Ovary (tissue), 10 donors: ENCODE measurements at regions of chr2 and their contacts with region 1.

Region 1: DNA sequence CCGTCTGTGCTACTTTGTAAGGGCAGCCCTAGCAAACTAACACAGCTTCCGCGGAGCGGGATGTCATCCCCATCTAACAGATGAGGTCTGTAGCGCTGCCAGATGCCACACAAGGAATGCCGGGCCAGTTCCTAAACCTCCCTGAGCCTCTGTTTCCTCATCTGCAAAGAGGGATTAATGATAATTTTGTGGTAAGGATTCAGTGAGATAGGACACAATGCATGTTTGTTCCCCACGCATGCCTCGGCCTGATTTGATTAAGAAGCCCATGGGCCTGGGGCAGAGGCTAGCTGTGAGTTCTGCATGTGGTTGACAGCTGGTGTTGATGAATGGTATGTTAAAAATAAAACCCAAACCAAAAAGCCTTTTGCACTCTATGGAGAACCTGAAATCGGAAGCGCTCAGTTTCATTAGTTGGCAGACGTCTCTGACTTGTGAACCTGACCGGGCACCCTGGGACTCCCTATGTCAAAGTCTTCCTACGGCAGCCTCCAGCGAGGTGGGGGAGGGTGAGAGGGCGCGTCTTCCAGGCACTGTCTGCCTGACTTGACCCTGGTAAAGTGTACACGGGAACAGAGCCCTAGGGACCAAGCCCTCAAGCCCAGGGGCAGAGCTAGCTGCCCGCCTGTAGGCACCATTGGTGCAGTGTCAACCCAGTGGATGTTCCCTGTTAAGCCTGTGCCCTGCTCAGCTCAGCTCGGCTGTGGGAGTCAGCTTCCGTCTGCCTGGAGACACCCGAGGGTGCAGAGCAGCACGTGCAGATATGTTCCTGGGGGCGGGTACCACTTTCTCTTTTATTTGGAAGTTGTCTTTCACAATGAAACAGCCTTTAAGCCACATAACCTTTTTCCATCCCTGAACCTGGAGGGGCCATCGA is 14.8 kb upstream of the INHBB start:
- DNase-seq: no peak
- H3K4me3 ChIP-seq: no peak overlapping the region
- H3K27ac ChIP-seq: no peak overlapping the region
- H3K4me1 ChIP-seq: no peaks in the 10 kb centered on the region
- H3K27me3 ChIP-seq: no peaks in the 10 kb centered on the region
- CTCF ChIP-seq: no peak
- EP300 ChIP-seq: no peak
- POLR2A ChIP-seq: no peak

Region 2: GRCh38 chr2:121076885-121077549 is 745.8 kb after region 1 on chr2:
- intact Hi-C with region 1: loop called in 1 of 4 experiments (anchors 10 kb)
- DNase-seq: peak in 3 of 5 donors; percentile 45 to 73 (median 49)
- H3K4me3 ChIP-seq: no peak overlapping the region
- H3K27ac ChIP-seq: no peak overlapping the region
- H3K4me1 ChIP-seq: no peaks in the 10 kb centered on the region
- H3K27me3 ChIP-seq: no peaks in the 10 kb centered on the region
- CTCF ChIP-seq: peak in 2 of 3 donors; percentile 17 to 22
- EP300 ChIP-seq: no peak
- POLR2A ChIP-seq: no peak